ENCODE measurements at regions of chr14 and their contacts with region 1.

Region 1: DNA sequence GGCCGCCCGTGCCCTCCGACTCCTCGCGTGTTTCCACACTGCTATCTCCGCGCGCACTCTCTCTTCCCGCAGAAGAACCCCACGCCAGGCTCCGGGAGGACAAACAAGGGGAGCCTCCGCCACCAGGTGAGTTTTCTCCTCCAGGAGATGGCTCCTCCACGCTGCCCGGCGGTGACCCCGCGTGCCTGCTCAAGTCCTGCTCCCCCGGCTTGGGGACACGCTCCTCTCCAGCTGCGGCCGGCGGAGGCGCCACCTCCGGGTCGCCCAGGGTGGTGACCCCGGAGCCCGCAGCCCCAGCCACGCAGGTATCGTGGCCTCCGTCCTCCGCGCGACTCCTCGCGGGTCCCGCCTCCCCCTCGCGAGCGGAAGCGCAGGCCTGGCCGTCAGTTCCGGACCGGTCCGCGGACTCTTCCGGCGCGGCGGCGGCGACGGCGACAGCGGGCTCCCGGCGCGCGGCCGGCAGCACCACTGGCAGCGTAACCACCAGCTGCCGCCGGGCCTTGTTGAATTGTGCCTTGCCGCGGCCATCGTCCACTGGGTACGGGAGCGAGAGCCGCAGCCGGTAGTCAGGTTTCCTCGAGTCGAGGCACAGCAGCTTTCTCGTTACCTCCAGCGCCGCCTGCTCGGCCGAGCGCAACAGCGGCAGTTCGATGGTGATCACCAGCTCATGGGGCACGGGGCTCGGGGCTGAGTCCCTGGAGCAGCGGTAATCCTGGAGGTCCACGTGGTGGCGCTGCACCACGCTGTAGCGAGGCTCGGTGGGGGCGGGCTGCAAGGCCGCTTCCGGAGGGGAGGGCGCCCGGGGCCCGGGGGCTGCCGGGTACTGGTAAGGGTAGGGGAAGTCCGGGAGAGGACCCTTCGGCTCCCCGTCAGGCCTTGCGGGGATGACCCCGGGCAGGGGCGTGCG is 1.2 kb downstream of the DNAAF2 start:
- DNase-seq: peak; percentile 47
- H3K4me3 ChIP-seq: peak overlapping the region; percentile 97
- H3K27me3 ChIP-seq: no peaks in the 10 kb centered on the region
- CTCF ChIP-seq: peak; percentile 82

Region 2: DNA sequence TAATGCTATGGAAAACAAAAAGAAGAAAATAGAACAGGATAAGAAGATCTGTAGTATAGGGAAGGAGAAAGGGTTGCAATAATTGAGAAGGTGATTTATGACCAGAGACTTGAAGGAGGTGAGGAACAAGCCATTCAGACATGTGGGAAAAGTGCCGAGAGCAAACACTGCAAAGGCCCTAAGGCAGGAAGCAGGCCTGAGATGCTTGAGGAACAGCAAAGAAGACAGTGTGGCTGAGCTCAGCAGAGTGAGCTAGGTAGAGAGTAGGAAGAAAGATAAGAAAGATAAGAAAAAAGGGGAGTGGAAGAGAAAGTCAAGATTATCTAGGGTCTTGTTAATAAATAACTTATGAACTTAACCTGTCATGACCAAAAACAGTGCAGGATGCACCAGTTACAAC is 719.5 kb before region 1 on chr14:
- CTCF ChIA-PET with region 1: no interaction called
- POLR2A ChIA-PET with region 1: no interaction called
- DNase-seq: no peak
- H3K4me3 ChIP-seq: no peak overlapping the region
- H3K27me3 ChIP-seq: no peaks in the 10 kb centered on the region
- CTCF ChIP-seq: no peak

Region 3: GRCh38 chr14:49483268-49483667 is 150.6 kb before region 1 on chr14:
- CTCF ChIA-PET with region 1: no interaction called
- POLR2A ChIA-PET with region 1: no interaction called
- DNase-seq: no peak
- H3K4me3 ChIP-seq: no peak overlapping the region
- H3K27me3 ChIP-seq: no peaks in the 10 kb centered on the region
- CTCF ChIP-seq: no peak

Region 4: DNA sequence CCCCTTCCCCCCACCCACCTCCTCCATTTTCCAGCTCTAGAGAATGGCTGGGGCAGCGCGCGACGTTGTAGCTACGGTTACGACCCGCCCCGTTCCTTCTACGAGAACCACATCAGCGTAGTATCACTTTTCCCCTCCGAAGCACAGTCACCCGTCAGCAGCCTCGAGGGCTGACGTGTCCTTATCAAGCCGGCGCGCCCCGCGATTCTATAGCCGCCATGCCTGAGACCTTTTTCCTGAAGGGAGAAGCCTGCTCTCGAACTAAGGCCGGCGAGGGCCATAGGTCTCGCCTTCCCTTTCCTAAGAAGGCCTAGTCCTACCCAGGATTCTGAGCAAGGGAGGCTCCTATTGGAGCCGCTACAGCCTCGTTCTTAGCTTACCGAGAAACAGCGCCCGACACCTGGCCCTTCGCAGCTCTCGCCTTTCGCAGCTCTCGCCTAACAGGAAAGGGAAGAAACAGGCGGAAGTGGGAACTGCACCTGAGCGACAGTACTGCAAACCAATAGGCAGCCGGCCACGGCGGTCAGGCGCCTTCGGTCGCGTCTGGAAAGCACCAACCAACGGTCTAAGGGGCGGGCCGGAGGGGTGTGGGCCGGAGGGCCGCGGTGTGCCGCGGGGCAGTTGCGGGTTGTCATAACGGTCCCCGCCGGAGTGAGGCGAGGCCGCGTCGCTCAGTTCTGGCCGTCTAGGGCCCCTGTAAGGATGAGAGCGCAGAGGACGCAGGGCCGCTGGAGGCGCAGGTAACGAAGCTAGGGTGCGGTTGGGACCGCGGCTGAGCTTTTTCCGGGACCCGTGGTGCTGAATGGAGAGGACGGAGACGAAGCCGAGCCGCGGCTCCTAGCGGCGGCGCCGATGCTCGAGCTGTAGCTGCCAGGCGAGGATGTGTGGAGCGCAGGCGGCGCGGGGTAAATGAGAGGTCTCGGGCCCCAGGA is 13.4 kb before region 1 on chr14 and contains the starts of genes MGAT2 and RPL36AL:
- CTCF ChIA-PET with region 1: interaction called, 25 read pairs
- POLR2A ChIA-PET with region 1: interaction called, 11 read pairs
- DNase-seq: peak; percentile 91
- H3K4me3 ChIP-seq: peak within 1 kb of the TSS; percentile 95
- H3K27me3 ChIP-seq: no peaks in the 10 kb centered on the region
- CTCF ChIP-seq: peak; percentile 57
- polyA plus RNA-seq, gene MGAT2: 24.1 and 35.2 TPM in 2 replicates
- polyA plus RNA-seq, gene RPL36AL: 87.9 and 203 TPM in 2 replicates

Region 5: GRCh38 chr14:49767562-49768300 is 133.8 kb after region 1 on chr14 and contains the start of gene KLHDC2:
- CTCF ChIA-PET with region 1: interaction called, 11 read pairs
- POLR2A ChIA-PET with region 1: interaction called, 3 read pairs
- DNase-seq: peak; percentile 27
- H3K4me3 ChIP-seq: peak within 1 kb of the TSS; percentile 68
- H3K27me3 ChIP-seq: no peaks in the 10 kb centered on the region
- CTCF ChIP-seq: no peak
- polyA plus RNA-seq, gene KLHDC2: 47.3 and 66.1 TPM in 2 replicates

Region 6: GRCh38 chr14:49828640-49829039 is 194.7 kb after region 1 on chr14:
- CTCF ChIA-PET with region 1: interaction called, 21 read pairs
- POLR2A ChIA-PET with region 1: no interaction called
- DNase-seq: no peak
- H3K4me3 ChIP-seq: no peak overlapping the region
- H3K27me3 ChIP-seq: no peaks in the 10 kb centered on the region
- CTCF ChIP-seq: no peak